Dorsolateral prefrontal cortex (tissue), 120 donors: ENCODE measurements at regions of chr1 and their contacts with region 1.

Region 1: GRCh38 chr1:59672851-59673572 is 141.7 kb upstream of the HOOK1 start:
- DNase-seq: no peak
- H3K4me3 ChIP-seq: no peak overlapping the region
- H3K27ac ChIP-seq: peak overlapping the region in 12 of 59 donors; percentile 5 to 71 (median 35)
- H3K27me3 ChIP-seq: no peaks in the 10 kb centered on the region
- CTCF ChIP-seq: no peak

Region 2: GRCh38 chr1:59631561-59632255 is 41.3 kb before region 1 on chr1:
- intact Hi-C with region 1: loop called in 1 of 2 experiments (anchors 5 kb)
- DNase-seq: no peak
- H3K4me3 ChIP-seq: no peak overlapping the region
- H3K27ac ChIP-seq: no peak overlapping the region
- H3K27me3 ChIP-seq: no peaks in the 10 kb centered on the region
- CTCF ChIP-seq: no peak

Region 3: DNA sequence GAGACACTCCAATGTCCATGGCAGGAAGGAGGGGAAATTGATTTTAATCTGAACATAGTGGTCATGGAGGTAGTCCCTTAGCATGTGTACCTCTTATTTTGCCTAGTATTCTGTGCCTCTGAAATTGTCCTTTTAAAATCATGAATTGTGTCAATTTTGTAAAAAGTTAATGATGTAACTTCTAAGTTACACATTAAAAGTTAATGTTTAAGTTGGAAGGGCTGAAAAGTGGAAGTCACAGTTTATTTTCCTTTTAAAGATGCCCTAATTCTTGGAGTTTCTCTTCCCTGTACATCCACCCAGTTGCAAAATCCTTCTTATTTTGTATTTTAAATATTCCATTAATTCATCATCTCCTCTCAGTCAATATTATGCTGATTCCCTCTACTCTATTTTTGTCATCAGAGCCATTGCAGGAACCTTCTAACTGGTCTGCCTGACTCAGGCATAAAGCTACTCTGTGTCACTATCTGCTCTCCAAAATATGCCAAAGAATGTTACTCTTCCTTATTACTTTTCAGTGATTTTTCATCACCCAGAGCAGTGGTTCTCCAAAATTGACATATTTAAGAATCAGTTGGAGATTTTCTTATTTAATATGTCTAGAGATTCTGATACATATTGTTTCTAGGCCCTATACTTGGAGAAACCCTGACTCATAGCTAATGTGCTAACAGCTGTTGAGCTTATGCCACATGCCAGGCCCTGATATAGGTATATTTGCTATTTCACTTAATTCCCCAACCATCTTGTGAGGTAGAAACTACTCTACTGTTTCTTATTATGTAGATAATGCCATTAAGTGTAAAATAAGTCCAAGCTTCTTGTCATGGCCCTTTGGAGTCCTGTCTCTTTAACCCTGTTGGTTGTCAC is 146.8 kb after region 1 on chr1:
- intact Hi-C with region 1: no loop called
- DNase-seq: no peak
- H3K4me3 ChIP-seq: no peak overlapping the region
- H3K27ac ChIP-seq: no peak overlapping the region
- H3K27me3 ChIP-seq: peaks cover 0 to 14% (median 0%) of the 10 kb centered on the region in 45 donors
- CTCF ChIP-seq: no peak